Caco-2 (cell line): ENCODE measurements at regions of chr3 and their contacts with region 1.

Region 1: GRCh38 chr3:116757315-116757714 is 47.7 kb downstream of the TUSC7 start:
- DNase-seq: no peak
- H3K4me3 ChIP-seq: no peak overlapping the region
- H3K4me3 Mint-ChIP-seq: no peak overlapping the region
- H3K27ac Mint-ChIP-seq: no peak overlapping the region
- H3K4me1 ChIP-seq: no peaks in the 10 kb centered on the region
- H3K4me1 Mint-ChIP-seq: peaks cover 7% of the 10 kb centered on the region
- H3K27me3 ChIP-seq: no peaks in the 10 kb centered on the region
- H3K27me3 Mint-ChIP-seq: peaks cover 10% of the 10 kb centered on the region
- CTCF ChIP-seq: no peak

Region 2: DNA sequence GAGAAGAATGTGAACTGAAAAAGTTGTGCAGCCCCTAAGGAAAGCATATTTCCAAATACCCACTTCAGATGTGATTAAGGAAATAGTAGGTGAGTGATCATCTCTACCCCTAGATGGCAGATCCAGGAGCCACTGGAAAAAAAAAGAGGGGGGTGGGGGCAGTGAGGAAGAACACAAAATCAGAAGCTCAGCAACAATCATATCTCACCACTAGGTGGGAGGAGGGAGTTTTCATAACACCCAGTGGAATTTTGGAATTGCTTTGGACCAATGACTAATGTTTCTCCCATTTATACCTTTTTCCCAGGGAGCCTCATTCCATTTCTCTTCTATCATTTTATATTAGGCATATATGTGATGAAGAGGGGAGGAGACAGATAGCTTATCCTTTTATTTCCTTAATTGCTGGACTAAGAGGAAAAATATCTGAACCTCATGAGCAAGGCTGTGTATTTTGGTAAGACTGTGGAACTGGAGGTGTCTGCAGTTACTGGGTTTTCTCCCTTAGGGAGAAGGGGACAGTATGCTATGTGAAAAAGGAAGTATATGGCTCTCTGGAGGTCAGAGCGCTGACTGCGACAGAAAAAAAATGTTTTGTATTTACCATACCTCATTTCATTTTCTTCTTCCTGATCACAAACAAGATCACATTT is 770.6 kb before region 1 on chr3:
- CTCF ChIA-PET with region 1: no interaction called
- POLR2A ChIA-PET with region 1: no interaction called
- intact Hi-C with region 1: loop called (anchors 2 kb)
- DNase-seq: peak; percentile 45 to 55
- H3K4me3 ChIP-seq: no peak overlapping the region
- H3K4me3 Mint-ChIP-seq: no peak overlapping the region
- H3K27ac Mint-ChIP-seq: no peak overlapping the region
- H3K4me1 ChIP-seq: no peaks in the 10 kb centered on the region
- H3K4me1 Mint-ChIP-seq: no peaks in the 10 kb centered on the region
- H3K27me3 ChIP-seq: no peaks in the 10 kb centered on the region
- H3K27me3 Mint-ChIP-seq: peaks cover 16% of the 10 kb centered on the region
- CTCF ChIP-seq: peak; percentile 64 to 65

Region 3: GRCh38 chr3:116140100-116140689 is 617.1 kb before region 1 on chr3:
- CTCF ChIA-PET with region 1: no interaction called
- POLR2A ChIA-PET with region 1: no interaction called
- intact Hi-C with region 1: loop called (anchors 1 kb)
- DNase-seq: peak in 1 of 2 experiments; percentile 2
- H3K4me3 ChIP-seq: no peak overlapping the region
- H3K4me3 Mint-ChIP-seq: no peak overlapping the region
- H3K27ac Mint-ChIP-seq: no peak overlapping the region
- H3K4me1 ChIP-seq: no peaks in the 10 kb centered on the region
- H3K4me1 Mint-ChIP-seq: no peaks in the 10 kb centered on the region
- H3K27me3 ChIP-seq: no peaks in the 10 kb centered on the region
- H3K27me3 Mint-ChIP-seq: peaks cover 6% of the 10 kb centered on the region
- CTCF ChIP-seq: peak; percentile 83 to 89

Region 4: GRCh38 chr3:116601206-116601605 is 156.1 kb before region 1 on chr3:
- CTCF ChIA-PET with region 1: interaction called, 6 read pairs
- POLR2A ChIA-PET with region 1: no interaction called
- intact Hi-C with region 1: loop called (anchors 1 kb)
- DNase-seq: no peak
- H3K4me3 ChIP-seq: no peak overlapping the region
- H3K4me3 Mint-ChIP-seq: no peak overlapping the region
- H3K27ac Mint-ChIP-seq: no peak overlapping the region
- H3K4me1 ChIP-seq: no peaks in the 10 kb centered on the region
- H3K4me1 Mint-ChIP-seq: no peaks in the 10 kb centered on the region
- H3K27me3 ChIP-seq: no peaks in the 10 kb centered on the region
- H3K27me3 Mint-ChIP-seq: peaks cover 2% of the 10 kb centered on the region
- CTCF ChIP-seq: no peak

Region 5: GRCh38 chr3:116614795-116615362 is 142.4 kb before region 1 on chr3:
- CTCF ChIA-PET with region 1: interaction called, 3 read pairs
- POLR2A ChIA-PET with region 1: no interaction called
- intact Hi-C with region 1: loop called (anchors 1 kb)
- DNase-seq: peak in 1 of 2 experiments; percentile 2
- H3K4me3 ChIP-seq: no peak overlapping the region
- H3K4me3 Mint-ChIP-seq: no peak overlapping the region
- H3K27ac Mint-ChIP-seq: no peak overlapping the region
- H3K4me1 ChIP-seq: no peaks in the 10 kb centered on the region
- H3K4me1 Mint-ChIP-seq: no peaks in the 10 kb centered on the region
- H3K27me3 ChIP-seq: no peaks in the 10 kb centered on the region
- H3K27me3 Mint-ChIP-seq: no peaks in the 10 kb centered on the region
- CTCF ChIP-seq: peak; percentile 26 to 43

Region 6: DNA sequence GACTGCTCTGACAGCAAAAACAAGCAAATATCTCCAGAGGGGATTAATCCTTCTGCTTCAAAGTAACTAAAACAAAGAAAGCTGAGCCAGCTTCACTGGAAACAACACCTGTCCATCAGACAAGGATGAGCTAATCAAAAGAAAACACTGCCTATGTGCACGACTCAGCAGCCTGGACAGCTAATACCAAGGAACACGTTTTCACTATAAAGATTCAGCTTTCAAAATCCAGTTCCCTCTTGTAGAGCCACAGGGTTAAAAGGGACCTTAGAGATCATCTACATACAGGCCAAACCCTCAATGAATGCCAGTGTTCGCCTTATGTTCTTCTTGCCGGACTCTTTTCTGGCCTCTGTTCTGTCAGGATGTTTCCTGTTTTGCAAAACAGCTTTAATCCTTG is 40.8 kb before region 1 on chr3:
- CTCF ChIA-PET with region 1: no interaction called
- POLR2A ChIA-PET with region 1: no interaction called
- intact Hi-C with region 1: loop called (anchors 5 kb)
- DNase-seq: peak; percentile 45 to 47
- H3K4me3 ChIP-seq: no peak overlapping the region
- H3K4me3 Mint-ChIP-seq: no peak overlapping the region
- H3K27ac Mint-ChIP-seq: peak overlapping the region; percentile 14
- H3K4me1 ChIP-seq: peaks cover 34% of the 10 kb centered on the region
- H3K4me1 Mint-ChIP-seq: peaks cover 37% of the 10 kb centered on the region
- H3K27me3 ChIP-seq: no peaks in the 10 kb centered on the region
- H3K27me3 Mint-ChIP-seq: no peaks in the 10 kb centered on the region
- CTCF ChIP-seq: no peak

Region 7: DNA sequence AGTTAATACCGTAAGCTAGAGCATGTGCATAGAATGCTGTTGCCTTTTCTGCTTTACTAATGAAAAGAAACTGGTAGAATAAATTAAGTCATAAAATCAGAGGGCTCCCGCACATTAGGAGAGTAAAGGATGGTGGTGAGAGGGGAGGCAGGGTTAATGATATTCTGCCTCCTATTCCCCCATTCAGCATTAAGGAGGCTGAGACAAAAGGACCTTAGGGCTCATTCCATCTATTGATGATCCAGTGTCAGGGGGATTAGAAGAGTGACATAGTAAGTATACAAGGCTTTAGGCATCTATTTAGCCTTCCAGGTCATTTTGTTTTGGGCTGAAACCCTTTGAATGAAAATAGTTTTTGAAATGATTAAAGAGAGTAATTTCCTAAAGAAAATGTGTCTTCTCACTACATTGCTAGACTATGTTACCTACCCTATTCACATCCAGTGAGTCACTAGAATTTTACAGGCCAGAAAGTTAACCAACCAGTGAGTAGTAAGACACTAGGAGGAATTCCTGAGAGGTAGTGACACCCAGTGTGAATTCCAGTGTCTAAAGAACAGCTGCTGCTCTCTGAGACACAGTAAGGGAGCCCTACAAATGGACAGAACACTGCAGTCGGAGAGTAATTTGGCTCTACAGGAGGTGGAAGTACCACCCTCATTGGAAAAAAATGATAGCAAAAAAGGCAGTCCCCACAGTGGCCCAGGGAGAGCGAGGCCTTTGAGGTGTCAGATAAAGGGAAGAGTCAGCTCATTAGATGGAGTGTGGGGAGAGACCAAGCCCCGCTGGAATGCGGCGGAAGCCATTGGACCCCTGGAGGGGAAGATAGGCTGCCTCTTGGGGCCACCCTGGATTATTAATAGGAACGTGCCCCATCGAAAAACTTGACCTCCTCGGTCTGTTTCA is 19.8 kb after region 1 on chr3:
- CTCF ChIA-PET with region 1: interaction called, 11 read pairs
- POLR2A ChIA-PET with region 1: no interaction called
- intact Hi-C with region 1: no loop called
- DNase-seq: no peak
- H3K4me3 ChIP-seq: no peak overlapping the region
- H3K4me3 Mint-ChIP-seq: no peak overlapping the region
- H3K27ac Mint-ChIP-seq: no peak overlapping the region
- H3K4me1 ChIP-seq: no peaks in the 10 kb centered on the region
- H3K4me1 Mint-ChIP-seq: peaks cover 6% of the 10 kb centered on the region
- H3K27me3 ChIP-seq: no peaks in the 10 kb centered on the region
- H3K27me3 Mint-ChIP-seq: peaks cover 14% of the 10 kb centered on the region
- CTCF ChIP-seq: no peak

Region 8: GRCh38 chr3:116905794-116906193 is 148.5 kb after region 1 on chr3:
- CTCF ChIA-PET with region 1: no interaction called
- POLR2A ChIA-PET with region 1: no interaction called
- intact Hi-C with region 1: no loop called
- DNase-seq: no peak
- H3K4me3 ChIP-seq: no peak overlapping the region
- H3K4me3 Mint-ChIP-seq: no peak overlapping the region
- H3K27ac Mint-ChIP-seq: no peak overlapping the region
- H3K4me1 ChIP-seq: no peaks in the 10 kb centered on the region
- H3K4me1 Mint-ChIP-seq: no peaks in the 10 kb centered on the region
- H3K27me3 ChIP-seq: no peaks in the 10 kb centered on the region
- H3K27me3 Mint-ChIP-seq: peaks cover 4% of the 10 kb centered on the region
- CTCF ChIP-seq: no peak